Aorta (tissue), 5 donors: ENCODE measurements at regions of chr12 and their contacts with region 1.

Region 1: GRCh38 chr12:22100958-22101748 is 55.1 kb downstream of the CMAS start:
- DNase-seq: peak in 1 of 2 donors; percentile 48
- ATAC-seq: peak; percentile 62
- H3K4me3 ChIP-seq: no peak overlapping the region
- H3K27ac ChIP-seq: no peak overlapping the region
- H3K4me1 ChIP-seq: no peaks in the 10 kb centered on the region
- H3K27me3 ChIP-seq: no peaks in the 10 kb centered on the region

Region 2: DNA sequence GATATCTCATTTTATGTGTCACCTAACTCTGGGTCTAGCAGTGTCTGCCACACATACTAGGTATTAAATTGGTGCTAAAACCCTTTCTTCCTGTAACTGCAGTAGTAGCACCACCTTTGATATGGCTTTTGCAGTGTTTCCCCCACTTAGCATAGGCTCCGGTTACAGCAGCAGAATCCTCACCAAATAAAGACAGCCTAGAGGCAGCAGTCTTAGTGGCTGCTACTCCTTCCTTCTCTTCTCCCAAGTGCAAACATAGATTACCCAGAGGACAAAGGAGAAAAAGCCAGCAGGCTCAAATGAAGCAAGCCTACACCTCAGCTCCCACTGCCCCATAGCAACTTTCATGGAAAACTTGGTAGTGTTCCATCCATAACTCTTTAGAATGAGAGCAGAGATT is 129.8 kb before region 1 on chr12:
- intact Hi-C with region 1: no loop called
- DNase-seq: no peak
- ATAC-seq: no peak
- H3K4me3 ChIP-seq: no peak overlapping the region
- H3K27ac ChIP-seq: no peak overlapping the region
- H3K4me1 ChIP-seq: no peaks in the 10 kb centered on the region
- H3K27me3 ChIP-seq: no peaks in the 10 kb centered on the region

Region 3: DNA sequence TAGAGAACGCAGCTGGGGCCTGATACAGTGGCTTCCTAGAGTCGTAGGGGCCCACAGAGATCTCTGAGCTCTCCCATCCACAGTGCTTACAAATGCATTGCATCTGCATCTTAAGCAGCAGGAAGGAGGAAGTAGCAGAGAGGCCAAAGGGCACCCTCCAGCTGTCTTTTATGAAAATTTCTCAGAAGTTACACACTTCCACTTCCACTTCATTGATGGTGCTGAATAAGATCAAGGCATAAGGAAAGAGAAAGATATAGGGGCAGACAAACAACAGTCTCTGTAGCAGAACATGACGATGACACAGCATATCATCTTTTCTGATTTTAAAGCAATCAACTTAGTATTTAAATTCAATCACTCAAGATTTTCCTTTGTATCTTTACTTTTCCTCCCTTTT is 108.3 kb before region 1 on chr12:
- intact Hi-C with region 1: no loop called
- DNase-seq: no peak
- ATAC-seq: no peak
- H3K4me3 ChIP-seq: no peak overlapping the region
- H3K27ac ChIP-seq: no peak overlapping the region
- H3K4me1 ChIP-seq: no peaks in the 10 kb centered on the region
- H3K27me3 ChIP-seq: no peaks in the 10 kb centered on the region

Region 4: GRCh38 chr12:22116376-22116775 is 15.2 kb after region 1 on chr12:
- intact Hi-C with region 1: loop called in 1 of 2 experiments (anchors 1 kb)
- DNase-seq: no peak
- ATAC-seq: no peak
- H3K4me3 ChIP-seq: no peak overlapping the region
- H3K27ac ChIP-seq: no peak overlapping the region
- H3K4me1 ChIP-seq: no peaks in the 10 kb centered on the region
- H3K27me3 ChIP-seq: no peaks in the 10 kb centered on the region

Region 5: DNA sequence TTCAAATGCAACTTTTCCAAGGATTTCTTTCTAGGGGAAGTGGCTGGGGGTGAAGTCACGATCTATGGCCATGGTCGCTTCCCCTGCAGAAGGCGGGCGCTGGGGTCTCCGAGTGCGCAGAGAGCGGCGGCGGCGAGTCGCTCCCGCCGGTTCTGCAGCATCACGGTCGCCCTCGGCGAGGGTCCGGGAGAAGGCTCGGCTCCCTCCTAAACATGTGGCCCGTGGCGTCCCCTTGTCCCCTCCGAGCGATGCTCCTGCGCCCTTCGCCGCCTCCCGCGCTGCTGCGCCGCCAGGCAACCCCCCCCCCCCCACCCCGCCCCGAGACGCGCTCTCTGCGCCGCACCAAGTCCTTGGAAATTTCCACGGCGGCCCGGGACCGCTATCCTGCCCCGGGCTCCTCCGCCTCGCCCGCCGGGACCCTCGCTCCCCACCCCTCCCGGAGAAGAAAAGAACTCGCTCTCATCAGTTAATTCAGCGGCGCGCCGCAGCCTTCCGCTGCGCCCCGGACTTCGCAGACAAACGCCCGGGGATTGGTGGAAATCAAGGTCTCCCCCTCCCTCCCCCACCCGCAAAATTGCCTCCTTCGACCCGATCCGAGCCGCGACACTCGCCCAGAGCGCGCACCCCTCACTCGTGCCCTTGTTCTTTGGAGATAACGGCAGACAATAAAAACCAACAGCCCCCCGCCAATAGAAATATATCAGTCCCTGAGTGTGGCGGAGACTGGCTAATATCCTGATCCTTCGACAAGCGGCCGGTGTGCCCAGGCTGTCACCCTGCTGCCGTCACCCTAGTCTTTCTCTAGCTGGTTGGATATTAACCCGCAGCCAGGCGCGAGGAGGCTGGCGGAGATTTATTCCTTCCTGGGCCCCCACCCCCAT is 233.5 kb after region 1 on chr12 and contains the start of gene ST8SIA1:
- intact Hi-C with region 1: loop called (anchors 2 to 5 kb)
- DNase-seq: peak; percentile 53 to 79
- ATAC-seq: peak; percentile 57
- H3K4me3 ChIP-seq: peak within 1 kb of the TSS; percentile 5 to 47
- H3K27ac ChIP-seq: no peak within 1 kb of the TSS
- H3K4me1 ChIP-seq: no peaks in the 10 kb centered on the region
- H3K27me3 ChIP-seq: no peaks in the 10 kb centered on the region
- total RNA-seq, gene ST8SIA1: 3.6 to 9.0 TPM

Region 6: DNA sequence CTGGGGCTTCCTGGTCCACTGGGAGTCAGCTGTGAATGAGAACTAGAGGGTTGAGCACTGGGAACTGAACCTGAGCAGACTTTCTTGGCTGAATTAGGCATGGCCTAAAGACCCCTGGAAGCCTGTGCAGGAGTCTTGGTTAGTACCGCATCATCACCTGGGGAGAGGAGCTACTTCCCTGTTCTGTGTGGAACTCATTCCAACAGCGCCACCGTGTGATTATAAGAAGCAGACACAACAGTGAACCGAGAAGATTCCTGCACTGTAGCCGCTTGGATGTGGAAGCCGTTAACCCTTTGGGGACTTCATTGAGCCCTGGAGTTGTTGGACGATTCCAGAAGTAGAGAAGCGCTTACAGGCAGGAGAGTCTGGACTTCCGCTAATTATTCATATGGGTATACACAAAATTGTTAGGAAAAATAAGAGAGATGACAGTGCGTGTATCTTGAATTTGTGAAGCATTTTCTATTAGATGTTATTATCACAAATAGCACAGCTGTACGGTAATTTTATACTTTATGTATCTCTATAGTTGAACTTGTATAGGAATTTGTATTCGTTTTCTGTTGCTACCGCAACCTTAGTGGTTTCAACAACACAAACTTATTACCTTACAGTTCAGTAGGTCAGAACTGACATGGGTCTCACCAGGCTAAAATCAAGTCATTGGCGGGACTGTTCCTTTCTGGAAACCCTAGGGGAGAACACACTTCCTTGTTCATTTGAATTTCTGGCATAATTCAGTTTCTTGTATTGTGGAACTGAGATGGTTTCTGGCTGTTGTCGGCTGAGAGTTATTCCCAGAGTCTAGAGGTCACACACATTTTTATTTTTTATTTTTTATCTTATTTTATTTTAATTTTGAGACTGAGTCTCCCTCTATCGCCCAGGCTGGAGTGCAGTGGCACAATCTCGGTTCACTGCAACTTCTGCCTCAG is 342.5 kb after region 1 on chr12:
- intact Hi-C with region 1: loop called in 1 of 2 experiments (anchors 5 kb)
- DNase-seq: peak; percentile 51 to 55
- ATAC-seq: peak; percentile 89
- H3K4me3 ChIP-seq: no peak overlapping the region
- H3K27ac ChIP-seq: no peak overlapping the region
- H3K4me1 ChIP-seq: no peaks in the 10 kb centered on the region
- H3K27me3 ChIP-seq: no peaks in the 10 kb centered on the region